PC-3 (cell line): ENCODE measurements at regions of chr2 and their contacts with region 1.

Region 1: GRCh38 chr2:48420512-48421197 is 109.3 kb upstream of the STON1 start:
- DNase-seq: peak; percentile 98
- ATAC-seq: peak; percentile 89
- H3K4me3 ChIP-seq: peak overlapping the region; percentile 46; the same call in 1 of the 2 replicates
- H3K27ac ChIP-seq: peak overlapping the region; percentile 92
- H3K4me1 ChIP-seq: peaks cover 24% of the 10 kb centered on the region
- H3K27me3 ChIP-seq: no peaks in the 10 kb centered on the region
- CTCF ChIP-seq: peak; percentile 97

Region 2: GRCh38 chr2:47906157-47907038 is 514.3 kb before region 1 on chr2 and contains the start of gene FBXO11:
- CTCF ChIA-PET with region 1: no interaction called
- POLR2A ChIA-PET with region 1: no interaction called
- intact Hi-C with region 1: loop called (anchors 1 kb)
- DNase-seq: peak; percentile 98
- ATAC-seq: peak; percentile 81
- H3K4me3 ChIP-seq: peak within 1 kb of the TSS; percentile 86
- H3K27ac ChIP-seq: peak within 1 kb of the TSS; percentile 90
- H3K4me1 ChIP-seq: peaks cover 14% of the 10 kb centered on the region
- H3K27me3 ChIP-seq: no peaks in the 10 kb centered on the region
- CTCF ChIP-seq: peak; percentile 65
- total RNA-seq, gene FBXO11: 34.8 and 39.6 TPM in 2 replicates

Region 3: GRCh38 chr2:48107326-48107925 is 313.2 kb before region 1 on chr2:
- CTCF ChIA-PET with region 1: no interaction called
- POLR2A ChIA-PET with region 1: interaction called, 6 read pairs
- intact Hi-C with region 1: loop called (anchors 1 kb)
- DNase-seq: peak; percentile 91
- ATAC-seq: peak; percentile 15
- H3K4me3 ChIP-seq: no peak overlapping the region
- H3K27ac ChIP-seq: peak overlapping the region; percentile 91
- H3K4me1 ChIP-seq: peaks cover 54% of the 10 kb centered on the region
- H3K27me3 ChIP-seq: no peaks in the 10 kb centered on the region
- CTCF ChIP-seq: no peak

Region 4: DNA sequence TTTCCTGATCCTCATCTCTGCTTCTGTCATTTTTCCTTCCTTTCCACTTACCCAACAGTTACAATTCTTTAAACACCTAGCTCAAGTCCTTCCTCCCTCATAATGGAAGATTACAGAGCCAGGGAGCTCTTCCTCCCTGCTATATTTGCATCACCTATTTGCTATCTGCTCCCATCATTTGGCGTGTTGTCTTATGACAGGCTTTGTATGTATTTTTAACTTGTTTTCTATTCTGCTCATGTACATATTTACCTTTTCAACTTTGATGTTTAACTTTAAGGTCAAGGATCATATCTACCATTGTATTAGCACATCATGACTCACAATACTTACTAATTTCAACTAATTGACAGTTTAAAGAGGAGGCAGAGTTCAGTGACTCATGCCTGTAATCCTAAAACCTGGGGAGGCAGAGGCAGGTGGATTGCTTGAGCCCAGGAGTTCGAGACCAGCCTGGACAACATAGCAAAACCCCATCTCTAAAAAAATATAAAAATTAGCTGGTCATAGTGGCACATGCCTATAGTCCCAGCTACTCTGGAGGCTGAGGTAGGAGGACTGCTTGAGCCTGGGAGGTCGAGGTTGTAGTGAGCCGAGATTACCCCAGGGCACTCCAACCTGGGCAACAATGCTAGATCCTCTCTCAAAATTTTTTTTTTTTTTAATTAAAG is 198.7 kb before region 1 on chr2:
- CTCF ChIA-PET with region 1: no interaction called
- POLR2A ChIA-PET with region 1: no interaction called
- intact Hi-C with region 1: loop called (anchors 2 kb)
- DNase-seq: peak; percentile 87
- ATAC-seq: peak; percentile 90
- H3K4me3 ChIP-seq: no peak overlapping the region
- H3K27ac ChIP-seq: 0 out of 2 replicates have a peak overlapping the region, but pooled peaks have one; percentile 10
- H3K4me1 ChIP-seq: peaks cover 5% of the 10 kb centered on the region; the same call in 1 of the 2 replicates
- H3K27me3 ChIP-seq: no peaks in the 10 kb centered on the region
- CTCF ChIP-seq: no peak

Region 5: DNA sequence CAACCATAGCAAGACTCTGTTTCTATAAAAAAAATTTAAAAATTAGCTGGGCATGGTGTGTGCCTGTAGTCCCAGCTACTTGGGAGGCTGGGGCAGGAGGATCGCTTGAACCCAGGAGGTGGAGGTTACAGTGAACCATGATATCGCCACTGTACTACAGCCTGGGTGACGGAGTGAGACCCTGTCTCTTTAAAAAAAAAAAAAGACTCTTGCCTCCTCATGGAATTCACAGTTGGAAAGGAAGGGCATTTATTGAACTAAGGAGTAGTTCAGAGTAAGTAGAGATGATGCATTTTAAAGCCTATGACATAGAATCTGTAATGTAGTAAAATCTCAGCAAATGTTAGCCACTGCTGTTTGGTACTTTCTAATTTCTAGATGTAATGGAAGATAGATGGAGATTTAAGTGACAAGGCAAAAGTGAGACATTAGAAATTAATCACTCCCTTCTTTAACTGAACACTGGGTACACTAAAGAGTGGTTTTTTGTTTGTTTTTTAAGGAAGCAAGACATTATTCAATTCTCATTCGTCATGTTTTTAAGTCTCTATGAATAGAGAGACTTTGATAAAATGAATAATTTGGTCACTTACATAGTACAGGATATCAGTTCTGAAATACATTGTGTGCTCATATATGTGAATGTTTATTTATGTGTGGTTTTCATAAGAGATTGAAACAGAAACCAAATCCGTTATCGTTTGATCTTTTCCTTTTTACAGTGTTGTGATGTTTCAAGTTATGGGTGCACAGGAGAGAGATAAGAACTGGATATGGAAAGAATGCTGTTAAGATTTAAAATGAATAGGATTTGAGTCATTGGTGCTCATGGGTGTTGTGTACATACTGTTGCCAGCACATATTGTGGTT is 76.8 kb before region 1 on chr2:
- CTCF ChIA-PET with region 1: no interaction called
- POLR2A ChIA-PET with region 1: no interaction called
- intact Hi-C with region 1: loop called (anchors 2 kb)
- DNase-seq: peak; percentile 90
- ATAC-seq: peak; percentile 92
- H3K4me3 ChIP-seq: peak overlapping the region; percentile 55
- H3K27ac ChIP-seq: peak overlapping the region; percentile 84
- H3K4me1 ChIP-seq: peaks cover 33% of the 10 kb centered on the region
- H3K27me3 ChIP-seq: no peaks in the 10 kb centered on the region
- CTCF ChIP-seq: no peak

Region 6: DNA sequence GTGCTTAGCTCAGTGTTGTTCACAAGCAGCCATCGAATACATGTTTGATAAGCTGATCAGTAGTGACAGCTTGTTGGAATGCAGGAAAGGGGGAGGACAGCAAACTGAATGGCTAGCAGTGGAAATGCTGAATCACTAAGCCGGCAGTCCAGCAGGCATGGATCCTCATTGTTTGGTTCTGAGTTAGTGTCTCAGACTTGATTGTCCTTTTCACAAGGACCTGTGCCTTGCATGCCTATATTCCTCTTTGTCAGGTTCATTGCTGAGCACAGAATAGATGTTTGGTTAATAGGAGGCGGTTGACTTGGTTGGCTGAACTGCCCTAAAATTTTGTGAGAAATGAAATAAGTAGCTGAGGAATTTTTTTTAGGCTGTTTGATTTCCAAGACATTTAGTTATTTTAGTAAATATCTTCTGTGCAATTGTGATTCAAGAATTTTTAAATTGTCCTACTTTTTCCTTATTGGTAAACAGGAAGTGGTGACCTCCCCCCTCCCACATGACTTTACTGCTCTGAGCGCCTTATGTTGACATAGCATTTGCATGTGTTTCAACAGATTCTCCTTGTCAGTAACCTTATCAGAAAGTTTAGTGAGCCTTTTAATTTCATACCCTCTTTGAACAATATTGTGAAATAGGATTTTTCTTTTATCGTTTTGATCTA is 87.9 kb after region 1 on chr2:
- CTCF ChIA-PET with region 1: no interaction called
- POLR2A ChIA-PET with region 1: no interaction called
- intact Hi-C with region 1: no loop called
- DNase-seq: peak; percentile 21
- ATAC-seq: peak; percentile 23
- H3K4me3 ChIP-seq: no peak overlapping the region
- H3K27ac ChIP-seq: peak overlapping the region; percentile 38
- H3K4me1 ChIP-seq: peaks cover 25% of the 10 kb centered on the region
- H3K27me3 ChIP-seq: no peaks in the 10 kb centered on the region
- CTCF ChIP-seq: no peak

Region 7: DNA sequence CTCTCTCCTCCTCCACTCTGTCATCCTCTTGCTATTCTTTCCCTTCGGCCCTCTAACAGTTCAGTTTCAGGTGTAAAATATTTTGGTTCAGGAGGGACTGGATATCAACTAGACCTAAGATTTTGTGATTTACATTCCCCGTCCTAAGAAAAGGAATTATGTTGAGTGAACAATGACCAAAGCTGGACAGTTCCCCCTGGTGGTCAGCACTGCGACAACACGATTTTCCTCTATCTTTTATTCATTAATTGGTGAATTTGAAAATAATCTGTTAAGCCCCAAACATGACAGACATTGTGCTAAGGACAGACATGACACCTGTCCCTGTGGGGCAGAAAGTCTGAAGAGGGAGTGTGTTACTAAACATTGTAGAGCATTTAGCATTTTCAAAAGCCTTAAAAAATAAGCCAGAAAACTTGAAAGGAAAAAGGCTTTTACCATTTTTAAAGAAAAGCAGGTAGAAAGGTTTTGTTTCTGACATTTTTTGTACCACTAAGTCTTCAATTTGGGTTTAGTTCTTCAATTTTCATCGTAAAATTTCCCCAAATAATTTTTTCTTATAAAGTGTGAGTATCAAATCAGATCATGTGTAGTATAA is 168.6 kb after region 1 on chr2:
- CTCF ChIA-PET with region 1: no interaction called
- POLR2A ChIA-PET with region 1: no interaction called
- intact Hi-C with region 1: loop called (anchors 5 kb)
- DNase-seq: peak; percentile 62
- ATAC-seq: peak; percentile 49
- H3K4me3 ChIP-seq: no peak overlapping the region
- H3K27ac ChIP-seq: no peak overlapping the region
- H3K4me1 ChIP-seq: no peaks in the 10 kb centered on the region
- H3K27me3 ChIP-seq: no peaks in the 10 kb centered on the region
- CTCF ChIP-seq: peak; percentile 88